GM12878 (cell line): ENCODE measurements at regions of chr1 and their contacts with region 1.

Region 1: GRCh38 chr1:41573785-41574713 is 89.6 kb upstream of the EDN2 start:
- DNase-seq: peak; percentile 56
- ATAC-seq: peak; percentile 99
- H3K4me3 ChIP-seq: no peak overlapping the region
- H3K27ac ChIP-seq: no peak overlapping the region
- H3K4me1 ChIP-seq: peaks cover 14% of the 10 kb centered on the region
- H3K27me3 ChIP-seq: no peaks in the 10 kb centered on the region
- CTCF ChIP-seq: peak; percentile 95 to 98 (median 96); a peak in 5 of 6 replicates
- EP300 ChIP-seq: no peak
- POLR2A ChIP-seq: no peak
- RAD21 ChIP-seq: peak; percentile 99

Region 2: DNA sequence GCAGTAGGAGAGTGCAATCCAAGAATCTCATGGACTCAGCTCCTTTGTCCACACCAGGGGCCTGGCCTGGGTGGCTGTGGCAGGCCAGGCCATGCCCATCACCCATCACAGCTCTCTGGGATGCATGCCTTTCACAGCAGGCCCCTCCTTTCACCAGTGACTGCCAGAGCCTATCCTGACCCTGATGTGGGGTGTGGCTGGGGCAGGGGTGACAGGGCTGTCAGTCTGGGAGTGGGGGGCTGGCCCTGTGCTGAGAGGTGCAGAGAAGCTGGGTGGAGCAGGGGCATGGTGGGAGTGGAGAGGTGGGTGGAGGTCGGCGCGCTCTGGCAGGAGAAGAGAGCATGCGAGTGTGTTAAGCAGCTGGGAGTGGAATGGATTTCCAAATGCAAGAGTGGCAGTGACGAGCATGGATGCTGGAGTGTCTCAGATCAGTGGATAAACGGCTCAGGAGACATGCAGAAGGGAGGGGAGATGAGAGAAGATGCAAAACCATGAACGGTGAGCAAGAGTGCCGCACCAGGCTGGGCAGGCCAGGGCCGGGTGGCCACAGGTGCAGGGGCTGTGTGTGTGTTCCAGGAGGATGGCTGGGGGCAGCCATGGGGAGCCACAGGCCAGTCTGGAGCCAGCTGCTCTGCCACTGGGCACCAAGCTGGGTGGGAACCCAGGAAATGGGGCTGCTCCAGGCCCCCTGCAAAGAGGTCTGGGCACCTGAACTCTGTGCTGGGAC is 49.9 kb before region 1 on chr1:
- CTCF ChIA-PET with region 1: no interaction called
- POLR2A ChIA-PET with region 1: no interaction called
- RAD21 ChIA-PET with region 1: no interaction called
- SMC1A ChIA-PET with region 1: no interaction called
- in situ Hi-C with region 1: no loop called
- intact Hi-C with region 1: no loop called
- DNase-seq: no peak
- ATAC-seq: no peak
- H3K4me3 ChIP-seq: no peak overlapping the region
- H3K27ac ChIP-seq: no peak overlapping the region
- H3K4me1 ChIP-seq: no peaks in the 10 kb centered on the region
- H3K27me3 ChIP-seq: no peaks in the 10 kb centered on the region
- CTCF ChIP-seq: no peak
- EP300 ChIP-seq: no peak
- POLR2A ChIP-seq: no peak
- RAD21 ChIP-seq: no peak

Region 3: GRCh38 chr1:41560496-41560895 is 13.6 kb before region 1 on chr1:
- CTCF ChIA-PET with region 1: interaction called, 10 read pairs
- POLR2A ChIA-PET with region 1: no interaction called
- RAD21 ChIA-PET with region 1: no interaction called
- SMC1A ChIA-PET with region 1: no interaction called
- in situ Hi-C with region 1: no loop called
- intact Hi-C with region 1: no loop called
- DNase-seq: no peak
- ATAC-seq: no peak
- H3K4me3 ChIP-seq: no peak overlapping the region
- H3K27ac ChIP-seq: no peak overlapping the region
- H3K4me1 ChIP-seq: no peaks in the 10 kb centered on the region
- H3K27me3 ChIP-seq: no peaks in the 10 kb centered on the region
- CTCF ChIP-seq: no peak
- EP300 ChIP-seq: no peak
- POLR2A ChIP-seq: no peak
- RAD21 ChIP-seq: no peak

Region 4: GRCh38 chr1:41698916-41699860 is 125.1 kb after region 1 on chr1:
- CTCF ChIA-PET with region 1: interaction called, 12 read pairs
- POLR2A ChIA-PET with region 1: no interaction called
- RAD21 ChIA-PET with region 1: interaction called, 13 read pairs
- SMC1A ChIA-PET with region 1: interaction called, 3 read pairs
- in situ Hi-C with region 1: no loop called
- intact Hi-C with region 1: no loop called
- DNase-seq: peak; percentile 86
- ATAC-seq: peak; percentile 96
- H3K4me3 ChIP-seq: no peak overlapping the region
- H3K27ac ChIP-seq: peak overlapping the region; percentile 9; the same call in 1 of the 2 replicates
- H3K4me1 ChIP-seq: peaks cover 35% of the 10 kb centered on the region
- H3K27me3 ChIP-seq: no peaks in the 10 kb centered on the region
- CTCF ChIP-seq: no peak
- EP300 ChIP-seq: peak in 1 of 2 experiments; percentile 47; a peak in 1 of 4 replicates
- POLR2A ChIP-seq: no peak; the same call in 1 of the 2 replicates
- RAD21 ChIP-seq: peak; percentile 37

Region 5: DNA sequence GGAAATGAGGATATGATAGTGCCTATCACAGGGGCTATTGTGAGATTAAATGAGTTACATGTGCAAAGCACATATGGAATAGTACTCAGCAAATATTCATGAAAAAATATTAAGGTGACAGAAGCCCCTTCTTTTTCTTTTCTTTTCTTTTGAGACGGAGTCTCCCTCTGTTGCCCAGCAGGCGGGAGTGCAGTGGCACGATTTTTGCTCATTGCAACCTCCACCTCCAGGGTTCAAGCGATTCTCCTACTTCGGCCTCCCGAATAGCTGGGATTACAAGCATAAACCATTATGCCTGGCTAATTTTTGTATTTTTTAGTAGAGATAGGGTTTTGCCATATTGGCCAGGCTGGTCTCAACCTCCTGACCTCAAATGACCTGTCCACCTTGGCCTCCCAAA is 205.3 kb after region 1 on chr1:
- CTCF ChIA-PET with region 1: interaction called, 8 read pairs
- POLR2A ChIA-PET with region 1: no interaction called
- RAD21 ChIA-PET with region 1: interaction called, 4 read pairs
- SMC1A ChIA-PET with region 1: interaction called, 7 read pairs
- in situ Hi-C with region 1: no loop called
- intact Hi-C with region 1: loop called (anchors 1 kb)
- DNase-seq: no peak
- ATAC-seq: no peak
- H3K4me3 ChIP-seq: no peak overlapping the region
- H3K27ac ChIP-seq: no peak overlapping the region
- H3K4me1 ChIP-seq: no peaks in the 10 kb centered on the region
- H3K27me3 ChIP-seq: no peaks in the 10 kb centered on the region
- CTCF ChIP-seq: no peak
- EP300 ChIP-seq: no peak
- POLR2A ChIP-seq: no peak
- RAD21 ChIP-seq: peak; percentile 36; the same call in 1 of the 2 replicates

Region 6: GRCh38 chr1:41862384-41863174 is 288.5 kb after region 1 on chr1:
- CTCF ChIA-PET with region 1: interaction called, 35 read pairs
- POLR2A ChIA-PET with region 1: no interaction called
- RAD21 ChIA-PET with region 1: interaction called, 13 read pairs
- SMC1A ChIA-PET with region 1: interaction called, 4 read pairs
- in situ Hi-C with region 1: no loop called
- intact Hi-C with region 1: no loop called
- DNase-seq: no peak
- ATAC-seq: no peak
- H3K4me3 ChIP-seq: no peak overlapping the region
- H3K27ac ChIP-seq: no peak overlapping the region
- H3K4me1 ChIP-seq: peaks cover 9% of the 10 kb centered on the region
- H3K27me3 ChIP-seq: no peaks in the 10 kb centered on the region; a peak in 1 of 4 replicates
- CTCF ChIP-seq: no peak
- EP300 ChIP-seq: no peak
- POLR2A ChIP-seq: no peak
- RAD21 ChIP-seq: no peak

Region 7: DNA sequence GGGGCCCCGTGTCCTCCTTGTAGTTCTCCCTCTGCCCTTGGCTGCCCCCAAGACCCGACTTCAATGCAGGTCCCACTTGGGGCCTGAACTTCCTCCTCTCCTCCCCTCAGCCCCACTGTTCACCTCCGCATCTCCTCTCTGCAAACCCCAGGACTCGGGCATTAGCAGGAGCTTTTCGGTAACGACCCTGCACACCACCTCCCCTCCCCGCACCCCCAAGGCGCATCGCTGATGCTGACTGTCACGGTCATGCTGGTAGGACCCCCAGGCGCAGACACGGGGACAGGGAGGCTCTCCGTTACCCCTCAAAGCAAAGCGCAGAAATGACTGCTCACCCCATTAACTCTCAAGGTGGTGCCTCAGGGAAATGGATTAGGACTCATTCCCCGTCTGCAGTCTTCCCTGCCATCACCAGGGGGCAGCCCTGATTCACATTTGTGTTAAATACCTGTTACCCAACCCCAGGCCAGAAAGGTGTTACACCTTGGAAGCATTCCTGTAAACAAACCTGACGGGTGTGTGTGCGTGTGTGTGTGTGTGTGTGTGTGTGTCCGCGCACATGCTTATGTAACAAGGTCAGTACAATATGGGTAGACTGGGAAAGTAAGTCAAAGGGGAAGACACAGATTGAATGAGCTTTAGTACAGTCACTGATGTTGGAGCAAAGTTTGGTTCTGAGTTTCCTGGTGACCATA is 572.7 kb after region 1 on chr1:
- CTCF ChIA-PET with region 1: interaction called, 4 read pairs
- POLR2A ChIA-PET with region 1: no interaction called
- RAD21 ChIA-PET with region 1: no interaction called
- SMC1A ChIA-PET with region 1: no interaction called
- in situ Hi-C with region 1: no loop called
- intact Hi-C with region 1: loop called (anchors 10 kb)
- DNase-seq: no peak
- ATAC-seq: peak; percentile 93
- H3K4me3 ChIP-seq: no peak overlapping the region
- H3K27ac ChIP-seq: no peak overlapping the region
- H3K4me1 ChIP-seq: no peaks in the 10 kb centered on the region
- H3K27me3 ChIP-seq: no peaks in the 10 kb centered on the region
- CTCF ChIP-seq: peak; percentile 84 to 87 (median 85)
- EP300 ChIP-seq: no peak
- POLR2A ChIP-seq: no peak
- RAD21 ChIP-seq: peak; percentile 89